CD14-positive monocyte (primary cell): ENCODE measurements at regions of chr13 and their contacts with region 1.

Region 1: GRCh38 chr13:49279885-49280284 is 32.2 kb downstream of the CDADC1 start:
- DNase-seq: no peak
- H3K4me3 ChIP-seq: no peak overlapping the region
- H3K4me3 Mint-ChIP-seq: no peak overlapping the region
- H3K27ac ChIP-seq: no peak overlapping the region
- H3K27ac Mint-ChIP-seq: no peak overlapping the region
- H3K4me1 ChIP-seq: no peaks in the 10 kb centered on the region
- H3K4me1 Mint-ChIP-seq: no peaks in the 10 kb centered on the region
- H3K27me3 ChIP-seq: no peaks in the 10 kb centered on the region
- H3K27me3 Mint-ChIP-seq: no peaks in the 10 kb centered on the region
- CTCF ChIP-seq: no peak

Region 2: GRCh38 chr13:49108196-49108595 is 171.7 kb before region 1 on chr13:
- intact Hi-C with region 1: loop called in 1 of 2 experiments (anchors 10 kb)
- DNase-seq: peak; percentile 12 to 50 (median 45)
- H3K4me3 ChIP-seq: peak overlapping the region in 1 of 3 experiments; percentile 24
- H3K4me3 Mint-ChIP-seq: no peak overlapping the region
- H3K27ac ChIP-seq: peak overlapping the region in 1 of 2 donors; percentile 37
- H3K27ac Mint-ChIP-seq: no peak overlapping the region
- H3K4me1 ChIP-seq: peaks cover 36 to 39% of the 10 kb centered on the region in 2 donors
- H3K4me1 Mint-ChIP-seq: peaks cover 18% of the 10 kb centered on the region
- H3K27me3 ChIP-seq: no peaks in the 10 kb centered on the region
- H3K27me3 Mint-ChIP-seq: no peaks in the 10 kb centered on the region
- CTCF ChIP-seq: no peak

Region 3: GRCh38 chr13:49220036-49220855 is 59.6 kb before region 1 on chr13 and contains the start of gene MLNR:
- intact Hi-C with region 1: loop called in 1 of 2 experiments (anchors 10 kb)
- DNase-seq: peak in 2 of 3 donors; percentile 32 to 37
- H3K4me3 ChIP-seq: peak within 1 kb of the TSS; percentile 29 to 73 (median 29)
- H3K4me3 Mint-ChIP-seq: peak within 1 kb of the TSS; percentile 74 to 86
- H3K27ac ChIP-seq: no peak within 1 kb of the TSS
- H3K27ac Mint-ChIP-seq: peak within 1 kb of the TSS in 1 of 7 donors; percentile 54
- H3K4me1 ChIP-seq: peaks cover 35 to 37% of the 10 kb centered on the region in 2 donors
- H3K4me1 Mint-ChIP-seq: peaks cover 41% of the 10 kb centered on the region
- H3K27me3 ChIP-seq: peaks cover 27 to 39% of the 10 kb centered on the region in 2 donors
- H3K27me3 Mint-ChIP-seq: peaks cover 35 to 49% (median 40%) of the 10 kb centered on the region in 3 donors
- CTCF ChIP-seq: peak; percentile 65
- polyA plus RNA-seq, gene MLNR: not detected

Region 4: GRCh38 chr13:49240017-49240416 is 39.9 kb before region 1 on chr13:
- intact Hi-C with region 1: loop called in 1 of 2 experiments (anchors 5 kb)
- DNase-seq: peak; percentile 23 to 48 (median 39)
- H3K4me3 ChIP-seq: no peak overlapping the region
- H3K4me3 Mint-ChIP-seq: no peak overlapping the region
- H3K27ac ChIP-seq: no peak overlapping the region
- H3K27ac Mint-ChIP-seq: no peak overlapping the region
- H3K4me1 ChIP-seq: no peaks in the 10 kb centered on the region
- H3K4me1 Mint-ChIP-seq: peaks cover 2% of the 10 kb centered on the region
- H3K27me3 ChIP-seq: no peaks in the 10 kb centered on the region
- H3K27me3 Mint-ChIP-seq: peaks cover 2 to 5% (median 2%) of the 10 kb centered on the region in 3 donors
- CTCF ChIP-seq: peak; percentile 69

Region 5: DNA sequence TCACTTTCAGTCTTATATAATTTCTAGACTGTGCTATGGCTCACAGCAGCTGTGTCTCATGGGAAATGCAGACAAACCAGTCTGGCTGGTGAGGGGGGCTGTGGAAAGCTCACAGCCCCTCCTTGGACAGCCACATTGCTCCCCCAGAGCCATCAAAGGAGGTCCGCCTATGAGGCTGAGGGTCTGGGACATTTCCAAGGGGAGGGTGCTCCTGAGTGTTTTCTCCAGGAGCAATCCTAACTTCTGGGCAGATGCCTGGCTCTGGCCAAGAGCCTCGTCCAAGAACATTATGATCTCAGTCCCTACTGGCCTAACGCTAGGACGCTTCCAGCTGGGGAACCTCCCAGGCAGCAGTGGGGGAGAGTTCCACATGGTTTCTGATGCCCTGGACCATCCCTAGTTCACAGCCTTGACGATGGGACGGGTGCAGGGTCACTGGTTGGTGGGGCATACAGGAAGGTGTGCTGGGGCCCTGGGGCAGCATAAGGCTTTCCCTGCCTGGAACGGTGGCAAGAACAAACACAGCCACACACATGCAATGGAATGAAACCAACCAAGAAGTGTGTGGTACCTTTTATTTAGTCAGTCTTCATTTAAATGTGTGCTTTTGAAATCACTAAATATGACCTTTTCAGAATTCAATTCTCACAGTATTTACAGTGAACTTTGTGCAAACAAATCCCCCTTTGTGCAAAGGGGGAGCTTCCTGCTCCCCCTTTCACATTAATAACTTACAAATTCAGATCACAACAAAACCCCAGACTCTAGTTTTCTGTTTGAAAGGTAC is 28.4 kb after region 1 on chr13:
- intact Hi-C with region 1: no loop called
- DNase-seq: no peak
- H3K4me3 ChIP-seq: no peak overlapping the region
- H3K4me3 Mint-ChIP-seq: no peak overlapping the region
- H3K27ac ChIP-seq: no peak overlapping the region
- H3K27ac Mint-ChIP-seq: no peak overlapping the region
- H3K4me1 ChIP-seq: no peaks in the 10 kb centered on the region
- H3K4me1 Mint-ChIP-seq: peaks cover 1% of the 10 kb centered on the region
- H3K27me3 ChIP-seq: no peaks in the 10 kb centered on the region
- H3K27me3 Mint-ChIP-seq: peaks cover 0 to 3% (median 1%) of the 10 kb centered on the region in 3 donors
- CTCF ChIP-seq: no peak

Region 6: DNA sequence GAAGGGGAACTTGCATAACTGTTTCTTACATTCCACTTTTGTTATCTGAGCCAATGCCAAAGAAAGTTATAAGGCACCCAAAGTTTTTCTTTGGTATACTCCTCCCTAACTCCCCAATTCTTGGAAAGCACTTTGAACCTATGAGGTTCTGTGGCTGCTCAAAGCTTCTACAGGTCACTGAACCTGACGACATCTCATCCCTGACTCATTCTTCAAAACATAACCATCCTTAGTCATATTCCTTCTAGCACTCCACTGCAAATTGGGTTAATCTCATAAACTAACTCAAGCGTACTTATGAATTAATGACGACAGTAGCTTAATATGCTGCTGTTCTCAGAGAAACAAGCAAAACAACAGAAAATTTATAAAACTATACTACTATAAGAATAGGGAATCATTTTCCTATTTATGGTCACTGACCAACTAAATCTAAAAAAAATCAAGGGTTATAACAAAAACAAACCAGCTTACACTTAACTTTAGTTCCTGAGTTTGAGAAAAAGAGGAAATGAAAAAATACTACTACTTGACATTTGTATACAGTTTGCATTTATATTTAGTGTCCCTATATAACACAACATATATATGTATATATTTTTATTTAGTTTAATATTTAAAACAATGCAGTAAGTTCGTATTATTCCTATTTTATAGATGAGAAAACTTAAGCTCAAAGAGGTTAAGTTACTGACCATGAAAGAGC is 94.9 kb after region 1 on chr13:
- intact Hi-C with region 1: no loop called
- DNase-seq: peak in 1 of 3 donors; percentile 11
- H3K4me3 ChIP-seq: no peak overlapping the region
- H3K4me3 Mint-ChIP-seq: no peak overlapping the region
- H3K27ac ChIP-seq: no peak overlapping the region
- H3K27ac Mint-ChIP-seq: no peak overlapping the region
- H3K4me1 ChIP-seq: no peaks in the 10 kb centered on the region
- H3K4me1 Mint-ChIP-seq: no peaks in the 10 kb centered on the region
- H3K27me3 ChIP-seq: no peaks in the 10 kb centered on the region
- H3K27me3 Mint-ChIP-seq: peaks cover 0 to 2% (median 0%) of the 10 kb centered on the region in 3 donors
- CTCF ChIP-seq: no peak